ENCODE measurements at regions of chr6 and their contacts with region 1.

Region 1: GRCh38 chr6:32718879-32719278 is 22.3 kb upstream of the HLA-DQA2 start:
- DNase-seq: no peak
- ATAC-seq: no peak
- H3K4me3 Mint-ChIP-seq: no peak overlapping the region
- H3K27ac Mint-ChIP-seq: no peak overlapping the region
- H3K4me1 Mint-ChIP-seq: no peaks in the 10 kb centered on the region
- H3K27me3 Mint-ChIP-seq: peaks cover 8% of the 10 kb centered on the region
- CTCF ChIP-seq: no peak

Region 2: DNA sequence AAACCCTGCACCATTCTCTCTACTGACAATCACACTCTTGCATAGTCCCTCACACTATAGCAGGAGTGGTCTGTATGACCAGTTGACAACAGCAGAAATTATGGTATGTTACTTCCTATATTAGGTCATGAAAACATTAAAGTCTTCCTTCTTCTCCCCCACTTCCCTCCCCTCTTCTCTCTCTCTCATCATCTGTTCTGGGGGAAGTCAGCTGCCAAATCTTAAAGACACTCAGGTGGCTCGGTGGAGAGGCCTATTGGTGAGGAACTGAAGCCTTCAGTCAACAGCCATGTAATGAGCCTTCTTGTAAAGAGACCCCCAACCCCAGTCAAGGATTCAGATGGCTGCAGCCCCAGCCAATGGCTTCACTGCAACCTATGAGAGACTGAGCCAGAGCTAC is 336.1 kb before region 1 on chr6:
- CTCF ChIA-PET with region 1: no interaction called
- POLR2A ChIA-PET with region 1: no interaction called
- intact Hi-C with region 1: no loop called
- DNase-seq: no peak
- ATAC-seq: no peak
- H3K4me3 Mint-ChIP-seq: no peak overlapping the region
- H3K27ac Mint-ChIP-seq: peak overlapping the region; percentile 18
- H3K4me1 Mint-ChIP-seq: peaks cover 20% of the 10 kb centered on the region
- H3K27me3 Mint-ChIP-seq: no peaks in the 10 kb centered on the region
- CTCF ChIP-seq: no peak

Region 3: GRCh38 chr6:32774426-32774825 is 55.5 kb after region 1 on chr6:
- CTCF ChIA-PET with region 1: no interaction called
- POLR2A ChIA-PET with region 1: no interaction called
- intact Hi-C with region 1: loop called (anchors 5 kb)
- DNase-seq: no peak
- ATAC-seq: peak; percentile 89
- H3K4me3 Mint-ChIP-seq: no peak overlapping the region
- H3K27ac Mint-ChIP-seq: no peak overlapping the region
- H3K4me1 Mint-ChIP-seq: peaks cover 7% of the 10 kb centered on the region
- H3K27me3 Mint-ChIP-seq: peaks cover 6% of the 10 kb centered on the region
- CTCF ChIP-seq: no peak

Measured in activated B cell treated with CpG ODN at 0.5 μM for 24 hours (primary cell).